ENCODE measurements at regions of chr1 and their contacts with region 1.

Region 1: GRCh38 chr1:171494076-171494475 is 8.7 kb downstream of the PRRC2C start:
- DNase-seq: no peak
- ATAC-seq: no peak
- H3K4me3 Mint-ChIP-seq: no peak overlapping the region
- H3K27ac Mint-ChIP-seq: peak overlapping the region; percentile 46
- H3K4me1 Mint-ChIP-seq: peaks cover 78% of the 10 kb centered on the region
- H3K27me3 Mint-ChIP-seq: no peaks in the 10 kb centered on the region
- CTCF ChIP-seq: no peak

Region 2: DNA sequence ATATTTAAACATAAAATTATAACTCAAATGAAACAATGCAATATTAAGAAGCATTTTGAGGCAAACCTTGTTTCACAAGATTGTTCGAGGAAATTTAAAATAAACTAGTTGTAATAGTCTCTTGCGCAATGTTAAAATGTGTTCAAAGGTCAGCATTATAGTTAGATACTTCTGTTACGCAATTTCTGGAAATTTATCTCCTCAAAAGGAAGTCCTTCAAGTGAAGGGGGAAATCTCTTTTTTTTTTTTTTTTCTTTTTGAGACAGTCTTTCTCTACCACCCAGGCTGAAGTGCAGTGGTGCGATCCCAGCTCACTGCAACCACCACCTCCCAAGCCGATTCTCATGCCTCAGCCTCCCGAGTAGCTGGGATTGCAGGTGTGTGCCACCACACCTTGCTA is 128.0 kb before region 1 on chr1:
- CTCF ChIA-PET with region 1: no interaction called
- POLR2A ChIA-PET with region 1: no interaction called
- intact Hi-C with region 1: no loop called
- DNase-seq: no peak
- ATAC-seq: no peak
- H3K4me3 Mint-ChIP-seq: no peak overlapping the region
- H3K27ac Mint-ChIP-seq: no peak overlapping the region
- H3K4me1 Mint-ChIP-seq: no peaks in the 10 kb centered on the region
- H3K27me3 Mint-ChIP-seq: peaks cover 5% of the 10 kb centered on the region
- CTCF ChIP-seq: no peak

Region 3: DNA sequence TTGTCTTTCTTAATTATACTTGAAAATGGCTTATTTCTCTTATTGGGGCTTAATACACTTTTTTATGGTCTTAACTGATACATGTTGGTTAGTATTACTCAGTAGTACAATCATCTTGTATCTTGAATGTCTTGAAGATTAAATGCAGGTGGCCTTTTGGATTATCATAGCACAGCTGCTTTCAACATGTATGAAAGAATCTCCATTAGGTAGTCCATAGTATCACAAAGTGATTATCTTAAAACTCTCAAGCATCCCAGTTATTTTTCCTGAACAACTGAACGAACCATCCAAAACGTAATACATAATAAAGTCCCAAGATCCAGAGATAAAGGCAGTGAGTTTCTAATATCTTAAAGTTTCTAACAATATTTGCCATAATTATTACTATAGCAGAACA is 76.2 kb after region 1 on chr1:
- CTCF ChIA-PET with region 1: no interaction called
- POLR2A ChIA-PET with region 1: no interaction called
- intact Hi-C with region 1: loop called (anchors 5 kb)
- DNase-seq: no peak
- ATAC-seq: no peak
- H3K4me3 Mint-ChIP-seq: no peak overlapping the region
- H3K27ac Mint-ChIP-seq: no peak overlapping the region
- H3K4me1 Mint-ChIP-seq: peaks cover 6% of the 10 kb centered on the region
- H3K27me3 Mint-ChIP-seq: no peaks in the 10 kb centered on the region
- CTCF ChIP-seq: no peak

Region 4: DNA sequence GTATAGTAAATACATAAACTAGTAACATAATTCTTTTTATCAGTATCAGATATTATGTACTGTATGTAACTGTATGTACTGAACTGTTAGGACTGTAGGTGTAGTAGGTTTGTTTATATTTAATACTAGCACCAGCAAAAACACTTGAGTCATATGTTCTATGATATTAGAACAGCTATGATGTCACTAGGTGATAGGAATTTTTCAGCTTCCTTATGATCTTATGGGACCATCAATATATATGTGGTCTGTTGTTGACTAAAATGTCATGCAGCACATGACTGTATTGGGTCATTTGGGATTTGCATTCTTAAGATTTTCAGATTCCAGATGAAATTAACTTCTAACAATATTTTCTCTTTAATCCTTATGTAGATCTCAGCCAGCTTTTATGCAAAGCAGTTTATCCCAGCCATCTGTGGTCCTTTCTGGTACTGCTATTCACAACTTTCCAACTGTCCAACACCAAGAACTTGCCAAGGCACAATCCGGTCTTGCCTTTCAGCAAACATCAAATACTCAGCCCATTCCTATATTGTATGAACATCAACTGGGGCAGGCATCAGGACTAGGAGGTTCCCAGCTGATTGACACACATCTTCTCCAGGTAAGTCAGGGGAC is 89.6 kb after region 1 on chr1:
- CTCF ChIA-PET with region 1: no interaction called
- POLR2A ChIA-PET with region 1: no interaction called
- intact Hi-C with region 1: no loop called
- DNase-seq: no peak
- ATAC-seq: no peak
- H3K4me3 Mint-ChIP-seq: no peak overlapping the region
- H3K27ac Mint-ChIP-seq: peak overlapping the region; percentile 8
- H3K4me1 Mint-ChIP-seq: peaks cover 21% of the 10 kb centered on the region
- H3K27me3 Mint-ChIP-seq: no peaks in the 10 kb centered on the region
- CTCF ChIP-seq: no peak